ENCODE measurements at regions of chr11 and their contacts with region 1.

Region 1: GRCh38 chr11:66022401-66023185 is 3.7 kb downstream of the CATSPER1 start:
- DNase-seq: no peak
- H3K4me3 ChIP-seq: no peak overlapping the region
- CTCF ChIP-seq: peak; percentile 97

Region 2: DNA sequence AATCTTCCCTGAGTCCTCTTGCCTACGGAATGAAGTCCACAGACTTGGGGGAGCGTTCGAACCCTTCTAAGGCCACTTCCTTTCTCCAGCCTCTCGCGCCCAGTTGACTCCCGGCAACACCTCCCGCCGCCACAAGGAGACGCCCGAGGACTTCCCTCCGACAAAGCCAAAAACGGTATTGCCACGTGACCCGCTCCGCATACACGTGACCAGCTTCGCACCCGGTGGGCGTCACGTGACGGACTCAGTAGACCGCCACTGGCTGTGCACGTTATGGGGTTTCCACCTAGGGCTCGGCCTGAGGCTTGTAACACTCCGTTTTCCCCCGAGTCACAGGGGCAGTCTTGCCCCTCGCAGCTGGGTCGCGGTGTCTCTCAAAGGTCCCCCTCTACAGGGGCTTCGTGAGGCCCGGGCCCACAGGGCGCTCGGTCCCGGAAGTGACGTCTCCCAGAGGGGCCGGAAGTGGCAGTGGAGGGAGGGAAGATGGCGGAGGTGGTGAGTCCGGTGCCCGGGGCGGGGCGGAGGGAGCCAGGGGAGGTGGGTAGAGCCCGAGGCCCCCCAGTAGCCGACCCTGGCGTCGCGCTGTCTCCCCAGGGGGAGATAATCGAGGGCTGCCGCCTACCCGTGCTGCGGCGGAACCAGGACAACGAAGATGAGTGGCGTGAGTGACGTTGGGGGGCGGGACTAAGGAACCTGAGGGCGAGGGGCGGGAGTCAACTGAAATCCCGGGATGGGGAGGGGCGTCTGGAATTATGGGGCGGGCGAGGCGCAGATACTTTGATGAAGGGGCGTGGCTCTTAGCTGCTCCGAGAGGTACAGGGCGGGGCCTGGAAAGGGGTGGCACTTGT is 310.6 kb before region 1 on chr11 and contains the start of gene KAT5:
- CTCF ChIA-PET with region 1: interaction called, 10 read pairs
- POLR2A ChIA-PET with region 1: no interaction called
- DNase-seq: peak; percentile 83
- H3K4me3 ChIP-seq: peak within 1 kb of the TSS; percentile 87
- CTCF ChIP-seq: peak; percentile 94

Region 3: DNA sequence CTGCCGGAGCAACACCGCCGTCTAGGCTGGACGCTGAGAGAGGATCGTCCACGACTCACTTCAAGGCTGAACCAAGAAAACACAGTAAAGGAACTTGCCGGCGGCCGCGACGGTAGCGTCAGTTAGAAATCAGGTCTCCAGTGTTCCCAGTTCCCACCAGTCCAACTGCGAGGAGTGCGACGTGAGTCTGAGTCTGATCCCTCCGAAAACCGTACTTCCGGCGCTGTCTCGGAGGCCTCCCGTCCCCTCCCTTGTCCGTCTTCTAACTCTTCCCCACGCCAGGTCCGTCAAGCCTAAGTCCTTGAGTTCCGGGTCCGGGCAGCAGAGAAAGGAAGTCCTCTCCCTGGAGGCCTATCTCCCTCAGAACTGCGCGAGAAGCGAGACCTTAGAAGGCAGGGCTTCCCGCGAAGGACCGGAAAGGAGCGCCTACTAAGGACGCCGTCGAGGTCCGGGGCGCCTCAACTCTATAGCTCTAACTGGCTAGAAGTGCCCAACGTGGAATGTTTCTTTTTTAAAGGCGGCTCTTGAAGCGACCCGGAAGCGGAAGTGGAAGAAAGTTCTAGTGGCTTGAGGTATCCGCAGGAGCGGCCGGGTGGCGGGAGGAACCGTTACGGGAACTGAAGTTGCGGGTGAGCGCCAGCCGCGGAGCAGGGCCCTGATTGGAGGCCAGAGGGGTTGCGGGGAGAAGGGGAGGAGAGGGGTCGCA is 20.5 kb before region 1 on chr11 and contains the starts of genes BANF1 and EIF1AD:
- CTCF ChIA-PET with region 1: interaction called, 72 read pairs
- POLR2A ChIA-PET with region 1: interaction called, 6 read pairs
- DNase-seq: peak; percentile 88
- H3K4me3 ChIP-seq: peak within 1 kb of the TSS; percentile 94
- CTCF ChIP-seq: no peak

Region 4: GRCh38 chr11:66035653-66036333 is 13.2 kb after region 1 on chr11:
- CTCF ChIA-PET with region 1: interaction called, 118 read pairs
- POLR2A ChIA-PET with region 1: no interaction called
- DNase-seq: no peak
- H3K4me3 ChIP-seq: no peak overlapping the region
- CTCF ChIP-seq: no peak

Region 5: GRCh38 chr11:66051766-66052663 is 29.4 kb after region 1 on chr11 and contains the start of gene SF3B2:
- CTCF ChIA-PET with region 1: interaction called, 118 read pairs
- POLR2A ChIA-PET with region 1: no interaction called
- DNase-seq: peak; percentile 84
- H3K4me3 ChIP-seq: peak within 1 kb of the TSS; percentile 95
- CTCF ChIP-seq: no peak

Region 6: GRCh38 chr11:66136752-66137123 is 114.1 kb after region 1 on chr11:
- CTCF ChIA-PET with region 1: interaction called, 10 read pairs
- POLR2A ChIA-PET with region 1: no interaction called
- DNase-seq: no peak
- H3K4me3 ChIP-seq: no peak overlapping the region
- CTCF ChIP-seq: no peak

Measured in AG04449 (cell line).